ENCODE measurements at regions of chr7 and their contacts with region 1.

Region 1: GRCh38 chr7:99392677-99393354 is 15.6 kb downstream of the PDAP1 start:
- DNase-seq: peak; percentile 89
- ATAC-seq: peak; percentile 90
- H3K4me3 Mint-ChIP-seq: peak overlapping the region; percentile 50
- H3K27ac Mint-ChIP-seq: peak overlapping the region; percentile 80
- H3K4me1 Mint-ChIP-seq: peaks cover 20% of the 10 kb centered on the region
- H3K27me3 Mint-ChIP-seq: no peaks in the 10 kb centered on the region

Region 2: DNA sequence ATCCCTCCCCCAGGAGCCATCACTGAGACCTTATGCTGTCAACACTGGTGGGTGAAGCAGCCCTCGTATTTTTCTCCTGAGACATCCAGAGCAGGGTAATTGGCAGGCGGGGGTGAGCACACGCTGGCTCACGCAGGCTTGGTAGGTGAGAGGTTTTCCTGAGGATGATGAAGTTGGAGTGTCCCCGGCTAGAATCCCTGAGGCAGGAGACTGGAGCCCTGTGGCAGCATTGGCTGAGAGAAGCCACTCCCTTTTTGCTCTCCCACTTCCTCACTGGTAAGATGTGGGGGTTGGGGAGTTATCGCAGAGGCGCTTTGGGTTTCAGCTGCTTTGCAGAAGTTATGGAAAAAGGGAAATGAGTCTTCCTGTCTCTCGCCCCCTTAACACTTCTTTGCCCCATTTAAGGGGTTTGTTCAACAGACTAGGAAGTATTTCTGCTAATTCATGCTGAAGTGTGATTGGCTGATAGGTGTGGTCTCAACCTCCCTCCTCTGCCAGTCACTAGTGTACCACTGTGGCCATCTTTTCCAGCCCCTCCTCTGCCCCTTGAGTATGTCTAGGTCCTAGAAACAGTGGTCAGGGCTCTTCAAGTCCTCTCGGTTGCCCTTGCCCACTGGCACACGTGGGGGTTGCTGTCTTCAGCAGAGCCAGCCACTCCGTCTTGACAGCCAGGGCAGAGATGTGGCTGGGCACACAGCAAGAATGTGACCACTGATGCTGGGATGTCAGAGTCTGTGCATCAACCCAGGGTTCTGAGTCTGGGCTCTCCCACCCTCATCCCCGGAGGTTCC is 12.6 kb before region 1 on chr7:
- CTCF ChIA-PET with region 1: interaction called, 3 read pairs
- POLR2A ChIA-PET with region 1: interaction called, 7 read pairs
- intact Hi-C with region 1: loop called in 1 of 2 experiments (anchors 1 kb)
- DNase-seq: peak; percentile 69
- ATAC-seq: peak; percentile 22
- H3K4me3 Mint-ChIP-seq: peak overlapping the region; percentile 78
- H3K27ac Mint-ChIP-seq: peak overlapping the region; percentile 96
- H3K4me1 Mint-ChIP-seq: peaks cover 62% of the 10 kb centered on the region
- H3K27me3 Mint-ChIP-seq: no peaks in the 10 kb centered on the region

Region 3: DNA sequence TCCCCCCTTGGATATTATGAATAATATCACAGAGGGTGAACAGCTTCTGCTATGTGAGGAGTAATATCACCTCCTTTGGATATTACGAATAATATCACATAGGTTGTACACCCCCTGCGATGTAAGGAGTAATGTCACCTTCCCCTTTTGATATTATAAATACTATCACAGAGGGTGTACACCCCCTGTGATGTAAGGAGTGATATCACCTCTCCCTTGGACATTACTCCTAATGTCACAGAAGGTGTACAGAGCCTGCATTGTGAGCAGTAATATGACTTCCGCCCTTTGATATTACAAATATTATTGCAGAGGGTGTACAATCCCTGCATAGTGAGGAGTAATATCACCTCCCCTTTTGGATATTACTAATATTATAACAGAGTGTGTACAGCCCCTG is 196.1 kb after region 1 on chr7:
- CTCF ChIA-PET with region 1: no interaction called
- POLR2A ChIA-PET with region 1: no interaction called
- intact Hi-C with region 1: no loop called
- DNase-seq: no peak
- ATAC-seq: peak; percentile 41
- H3K4me3 Mint-ChIP-seq: no peak overlapping the region
- H3K27ac Mint-ChIP-seq: no peak overlapping the region
- H3K4me1 Mint-ChIP-seq: no peaks in the 10 kb centered on the region
- H3K27me3 Mint-ChIP-seq: no peaks in the 10 kb centered on the region

Measured in activated CD4-positive, alpha-beta T cell treated with anti-CD3 and anti-CD28 coated beads for 36 hours (primary cell).